Activated naive CD4-positive, alpha-beta T cell treated with anti-CD3 and anti-CD28 coated beads for 36 hours (primary cell): ENCODE measurements at regions of chr1 and their contacts with region 1.

Region 1: DNA sequence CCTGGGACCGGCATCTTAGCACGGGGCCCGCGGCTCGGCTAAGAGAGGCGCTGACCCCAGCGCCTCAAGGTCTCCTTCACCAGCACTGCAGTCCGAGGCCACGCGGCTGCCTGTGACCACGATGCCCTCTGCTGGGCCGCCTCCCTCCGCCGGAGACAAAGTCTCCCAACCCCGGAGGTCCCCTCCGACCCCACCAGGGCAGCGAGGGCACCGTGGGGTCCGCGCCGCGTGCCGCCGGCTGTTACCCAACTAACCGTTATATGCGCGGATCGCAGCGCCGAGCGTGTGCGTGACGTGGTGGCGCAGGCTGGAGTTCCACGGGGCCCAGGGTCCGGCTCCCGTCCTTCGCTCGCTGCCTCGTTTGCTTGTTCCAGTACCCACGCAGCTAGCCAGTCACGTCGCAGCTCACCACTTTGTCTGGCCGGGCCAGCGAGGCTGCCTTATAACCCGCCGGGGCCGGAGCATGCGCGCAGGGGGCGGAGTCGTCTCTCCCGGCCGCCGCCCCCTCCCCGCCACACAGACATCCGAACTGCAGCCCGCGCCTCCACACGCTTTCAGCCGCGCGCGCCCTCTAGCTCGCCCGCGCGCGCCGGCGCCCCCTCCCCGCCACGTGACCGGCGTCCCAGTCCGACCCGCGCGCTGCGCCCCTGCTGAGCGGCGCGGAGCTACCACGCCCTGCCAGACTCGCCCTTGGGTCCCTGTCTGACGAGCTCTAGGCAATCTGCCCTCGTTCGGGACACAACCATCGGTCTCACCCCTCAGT is at the start of gene SLC16A1:
- DNase-seq: peak; percentile 87
- H3K4me3 Mint-ChIP-seq: peak within 1 kb of the TSS; percentile 95
- H3K27ac Mint-ChIP-seq: peak within 1 kb of the TSS; percentile 97
- H3K4me1 Mint-ChIP-seq: peaks cover 61% of the 10 kb centered on the region
- H3K27me3 Mint-ChIP-seq: no peaks in the 10 kb centered on the region
- total RNA-seq, gene SLC16A1: 56.3 to 57.5 TPM

Region 2: GRCh38 chr1:112619520-112620376 is 336.2 kb before region 1 on chr1 and contains the start of gene CAPZA1:
- CTCF ChIA-PET with region 1: no interaction called
- intact Hi-C with region 1: loop called (anchors 1 kb)
- DNase-seq: peak; percentile 95
- H3K4me3 Mint-ChIP-seq: peak within 1 kb of the TSS; percentile 99
- H3K27ac Mint-ChIP-seq: peak within 1 kb of the TSS; percentile 100
- H3K4me1 Mint-ChIP-seq: peaks cover 48% of the 10 kb centered on the region
- H3K27me3 Mint-ChIP-seq: no peaks in the 10 kb centered on the region
- total RNA-seq, gene CAPZA1: 231 to 242 TPM

Region 3: DNA sequence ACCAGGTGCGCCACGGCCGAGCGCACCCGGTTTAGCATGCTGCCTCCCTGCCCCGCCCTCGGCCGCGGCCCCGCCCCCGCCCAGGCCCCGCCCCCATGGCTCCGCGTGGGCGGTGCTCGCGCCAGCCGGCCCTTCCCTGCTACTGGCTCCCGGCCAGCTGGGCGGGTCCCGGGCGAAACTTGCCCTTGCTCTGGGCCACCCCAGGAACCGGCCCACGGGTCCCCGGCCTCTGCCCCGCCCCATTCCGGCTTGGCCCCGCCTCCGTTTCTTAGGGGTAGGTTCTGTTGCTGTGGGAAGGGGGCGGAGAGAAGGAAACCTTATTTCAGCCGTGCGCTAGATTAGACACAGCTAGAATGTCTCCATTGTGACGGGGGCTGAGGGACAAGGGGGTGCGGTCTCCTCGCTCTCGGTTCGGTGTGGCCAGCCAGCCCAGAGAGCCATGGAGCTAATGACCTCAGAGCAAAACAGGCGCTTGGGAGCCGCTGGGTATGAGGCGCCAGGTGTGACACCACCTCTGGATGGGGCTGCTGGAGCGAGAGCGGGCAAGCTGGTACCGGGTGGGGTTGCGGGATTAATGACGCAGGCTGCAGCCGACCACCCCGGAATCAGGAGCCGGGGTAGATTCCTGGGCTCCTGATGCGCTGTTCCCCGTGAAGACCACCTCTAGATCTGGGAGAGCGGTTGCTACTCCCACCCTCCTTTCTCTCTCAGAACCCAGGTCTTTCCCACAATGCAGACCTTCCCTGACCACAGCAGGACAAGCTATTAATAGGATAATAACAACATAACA is 240.5 kb before region 1 on chr1 and contains the start of gene PPM1J:
- CTCF ChIA-PET with region 1: interaction called, 3 read pairs
- intact Hi-C with region 1: loop called (anchors 1 kb)
- DNase-seq: peak; percentile 95
- H3K4me3 Mint-ChIP-seq: peak within 1 kb of the TSS; percentile 78
- H3K27ac Mint-ChIP-seq: no peak within 1 kb of the TSS
- H3K4me1 Mint-ChIP-seq: peaks cover 24% of the 10 kb centered on the region
- H3K27me3 Mint-ChIP-seq: peaks cover 24% of the 10 kb centered on the region
- total RNA-seq, gene PPM1J: 0.74 to 1.0 TPM

Region 4: DNA sequence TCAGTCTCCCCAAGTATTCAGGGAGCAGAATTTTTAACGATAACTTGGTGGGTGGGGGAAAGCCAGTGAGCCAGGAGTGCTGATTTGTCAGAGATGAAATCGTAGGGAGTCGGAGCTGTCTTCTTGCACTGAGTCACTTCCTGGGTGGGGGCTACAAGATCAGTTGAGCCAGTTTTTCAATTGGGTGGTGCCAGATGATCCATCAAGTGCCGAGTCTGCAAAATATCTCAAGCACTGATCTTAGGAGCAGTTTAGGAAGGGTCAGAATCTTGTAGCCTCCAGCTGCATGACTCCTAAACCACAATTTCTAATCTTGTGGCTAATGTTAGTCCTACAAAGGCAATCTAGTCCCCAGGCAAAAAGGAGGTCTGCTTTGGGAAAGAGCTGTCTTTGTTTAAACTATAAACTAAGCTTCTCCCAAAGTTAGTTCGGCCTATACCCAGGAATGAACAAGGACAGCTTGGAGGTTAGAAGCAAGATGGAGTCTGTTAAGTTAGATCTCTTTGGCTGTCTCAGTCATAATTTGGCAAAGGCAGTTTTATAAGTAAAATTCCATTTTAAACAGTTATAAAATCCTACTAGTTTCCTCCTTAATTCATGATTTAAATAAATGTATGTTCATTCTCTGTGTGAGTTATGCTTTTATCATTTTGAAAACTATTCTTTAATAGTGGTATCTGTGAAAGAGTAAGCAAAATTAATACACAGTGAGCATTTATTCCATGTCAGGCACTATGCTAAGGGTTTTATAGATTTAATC is 51.7 kb before region 1 on chr1:
- CTCF ChIA-PET with region 1: no interaction called
- intact Hi-C with region 1: loop called (anchors 1 kb)
- DNase-seq: peak; percentile 81
- H3K4me3 Mint-ChIP-seq: no peak overlapping the region
- H3K27ac Mint-ChIP-seq: no peak overlapping the region
- H3K4me1 Mint-ChIP-seq: peaks cover 37% of the 10 kb centered on the region
- H3K27me3 Mint-ChIP-seq: no peaks in the 10 kb centered on the region

Region 5: DNA sequence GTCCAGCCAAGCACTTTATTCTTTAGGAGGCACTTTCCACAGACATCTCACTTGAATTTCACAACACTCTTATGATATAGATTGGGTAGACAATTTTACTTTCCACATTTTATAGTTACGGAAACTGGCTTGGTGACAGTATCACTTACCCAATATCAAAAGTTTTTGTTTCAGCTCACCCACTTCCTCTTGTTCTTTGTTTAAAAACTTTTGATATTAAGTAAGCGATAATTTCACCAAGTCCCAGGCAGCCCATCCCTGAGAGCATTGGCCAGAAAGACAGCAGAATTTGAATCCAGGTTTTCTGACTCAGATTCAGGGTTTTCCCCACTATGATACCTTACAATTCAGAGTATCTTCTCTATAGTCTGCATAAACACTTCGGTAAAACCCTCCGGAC is 177.1 kb after region 1 on chr1:
- CTCF ChIA-PET with region 1: no interaction called
- intact Hi-C with region 1: loop called (anchors 5 kb)
- DNase-seq: peak; percentile 69
- H3K4me3 Mint-ChIP-seq: no peak overlapping the region
- H3K27ac Mint-ChIP-seq: peak overlapping the region; percentile 76
- H3K4me1 Mint-ChIP-seq: peaks cover 64% of the 10 kb centered on the region
- H3K27me3 Mint-ChIP-seq: no peaks in the 10 kb centered on the region

Region 6: DNA sequence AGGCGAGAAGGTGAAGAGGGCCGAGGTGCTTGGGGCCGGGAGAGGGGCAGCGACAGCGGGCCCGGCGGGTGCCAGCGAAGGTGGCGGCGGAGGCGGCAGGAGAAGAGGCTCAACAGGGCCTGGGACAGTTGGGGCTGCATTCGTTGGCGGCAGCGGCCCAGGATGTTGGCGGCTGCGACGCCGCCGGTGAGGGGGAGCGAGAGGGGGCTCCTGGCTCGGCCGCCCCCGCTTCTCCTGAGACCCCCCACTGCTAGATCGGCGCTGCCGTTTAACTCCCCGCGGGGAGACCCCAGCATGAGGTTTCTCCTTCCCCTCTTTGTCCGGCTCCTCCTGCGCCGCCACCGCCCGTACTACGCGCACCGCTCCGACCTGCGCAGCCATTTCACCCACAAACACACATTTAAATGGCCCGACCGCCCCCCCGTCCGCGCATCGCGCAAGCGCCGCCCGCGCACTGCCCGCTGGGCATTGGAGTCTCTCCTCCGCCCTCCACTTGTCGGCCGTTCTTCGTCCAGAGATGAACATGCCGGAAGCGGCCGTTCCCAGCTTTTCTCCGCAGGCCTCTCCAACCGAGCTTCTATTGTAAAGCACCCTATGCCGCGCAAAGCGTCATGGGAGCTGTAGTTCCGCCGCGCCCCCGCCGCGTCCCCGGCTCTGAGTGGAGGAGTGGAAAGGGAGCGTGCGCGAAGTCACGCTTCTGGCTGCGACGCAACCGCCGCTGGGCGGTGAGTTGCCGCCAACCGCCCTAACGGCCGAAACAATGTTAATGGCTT is 856.1 kb after region 1 on chr1 and contains the start of gene RSBN1:
- CTCF ChIA-PET with region 1: no interaction called
- intact Hi-C with region 1: loop called (anchors 1 kb)
- DNase-seq: peak; percentile 99
- H3K4me3 Mint-ChIP-seq: peak within 1 kb of the TSS; percentile 98
- H3K27ac Mint-ChIP-seq: peak within 1 kb of the TSS; percentile 94
- H3K4me1 Mint-ChIP-seq: peaks cover 31% of the 10 kb centered on the region
- H3K27me3 Mint-ChIP-seq: no peaks in the 10 kb centered on the region
- total RNA-seq, gene RSBN1: 13.6 to 14.3 TPM